WTC11 (cell line): ENCODE measurements at regions of chr20 and their contacts with region 1.

Region 1: DNA sequence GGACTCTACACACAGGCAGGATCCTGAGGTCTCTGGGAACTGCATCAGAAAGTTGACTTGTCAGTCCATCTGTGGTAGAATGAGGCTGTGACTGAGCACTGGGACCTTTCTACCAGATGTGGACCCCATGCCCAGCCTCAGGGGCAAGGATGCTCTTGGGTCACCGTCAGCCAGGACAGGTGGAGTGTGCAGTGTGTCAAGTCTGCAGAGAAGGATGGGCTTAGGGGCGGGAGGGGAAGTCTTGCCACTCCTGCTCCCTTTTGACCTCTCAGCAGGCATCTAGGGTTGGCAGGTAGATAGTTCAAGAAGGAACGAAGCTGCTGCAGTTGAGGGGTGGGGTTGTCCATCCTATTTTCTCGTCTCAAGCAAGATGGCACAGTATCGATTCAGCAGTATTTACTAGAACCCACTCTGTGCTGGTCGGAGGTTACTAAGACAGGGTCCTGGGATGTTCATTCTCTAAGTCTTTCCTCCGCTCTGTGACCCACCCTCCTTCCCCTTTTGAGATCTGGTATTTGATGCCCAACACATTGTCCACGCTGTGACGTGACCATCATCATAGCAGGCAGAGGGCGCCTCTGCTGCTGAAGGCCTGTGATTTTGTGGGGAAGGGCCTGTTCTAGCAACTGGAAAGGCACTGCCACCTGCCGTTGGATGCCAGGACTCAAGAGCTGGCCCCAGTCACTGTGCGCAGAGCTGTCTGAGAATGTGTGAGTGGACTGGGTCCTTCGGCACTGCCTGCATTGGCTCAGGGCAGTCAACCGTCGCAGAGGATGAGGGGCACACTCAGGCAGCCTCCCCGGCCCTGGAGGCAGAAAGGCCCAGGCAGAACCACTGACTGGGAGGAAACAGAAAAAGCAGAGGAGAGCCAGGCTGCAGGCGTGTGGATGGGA is 23.2 kb downstream of the RBCK1 start:
- DNase-seq: peak; percentile 75
- ATAC-seq: peak; percentile 57
- H3K4me3 Mint-ChIP-seq: no peak overlapping the region
- H3K27ac Mint-ChIP-seq: no peak overlapping the region
- H3K4me1 Mint-ChIP-seq: peaks cover 23% of the 10 kb centered on the region
- H3K27me3 Mint-ChIP-seq: peaks cover 40% of the 10 kb centered on the region
- CTCF ChIP-seq: peak; percentile 37; the same call in 1 of the 2 replicates

Region 2: DNA sequence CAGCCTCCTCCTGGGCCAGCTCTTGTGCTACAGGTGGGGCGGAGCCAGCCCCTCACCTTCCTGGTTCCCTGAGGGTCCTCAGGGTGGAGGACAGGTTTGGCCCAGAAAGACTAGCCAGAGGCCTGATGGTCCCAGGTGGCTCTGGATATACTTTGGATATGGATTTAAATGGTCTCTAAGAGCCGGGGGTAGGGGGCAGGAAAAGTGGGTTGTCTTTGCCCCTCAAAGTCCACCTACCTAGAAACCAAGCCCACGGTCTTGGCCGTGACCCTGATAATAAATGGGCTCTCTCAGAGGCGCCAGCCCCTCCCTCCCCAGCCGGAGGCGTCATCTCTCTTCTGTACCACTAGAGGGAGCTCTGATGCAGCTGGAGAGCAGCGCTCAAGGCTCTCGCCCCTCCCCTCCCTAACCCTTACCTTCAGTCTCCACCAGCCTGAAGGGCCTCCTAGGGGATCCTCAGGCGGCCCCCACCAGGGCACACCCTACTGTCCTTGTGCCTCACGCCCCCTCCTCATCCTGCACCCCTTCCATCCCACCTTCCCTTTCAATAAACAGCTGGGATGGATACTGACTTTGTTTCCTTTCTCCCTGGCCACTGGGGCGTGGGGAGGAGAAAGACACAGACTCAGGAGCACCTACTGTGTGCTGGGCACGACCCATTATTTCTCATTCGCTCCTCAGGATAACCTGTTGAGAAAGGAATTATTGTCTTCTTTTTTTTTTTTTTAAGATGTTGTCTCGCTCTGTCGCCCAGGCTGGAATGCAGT is 76.8 kb before region 1 on chr20:
- CTCF ChIA-PET with region 1: interaction called, 66 read pairs
- POLR2A ChIA-PET with region 1: no interaction called
- DNase-seq: peak; percentile 84
- ATAC-seq: peak; percentile 92
- H3K4me3 Mint-ChIP-seq: no peak overlapping the region
- H3K27ac Mint-ChIP-seq: no peak overlapping the region
- H3K4me1 Mint-ChIP-seq: peaks cover 6% of the 10 kb centered on the region; the same call in 1 of the 2 replicates
- H3K27me3 Mint-ChIP-seq: no peaks in the 10 kb centered on the region; the same call in 1 of the 2 replicates
- CTCF ChIP-seq: peak; percentile 95

Region 3: DNA sequence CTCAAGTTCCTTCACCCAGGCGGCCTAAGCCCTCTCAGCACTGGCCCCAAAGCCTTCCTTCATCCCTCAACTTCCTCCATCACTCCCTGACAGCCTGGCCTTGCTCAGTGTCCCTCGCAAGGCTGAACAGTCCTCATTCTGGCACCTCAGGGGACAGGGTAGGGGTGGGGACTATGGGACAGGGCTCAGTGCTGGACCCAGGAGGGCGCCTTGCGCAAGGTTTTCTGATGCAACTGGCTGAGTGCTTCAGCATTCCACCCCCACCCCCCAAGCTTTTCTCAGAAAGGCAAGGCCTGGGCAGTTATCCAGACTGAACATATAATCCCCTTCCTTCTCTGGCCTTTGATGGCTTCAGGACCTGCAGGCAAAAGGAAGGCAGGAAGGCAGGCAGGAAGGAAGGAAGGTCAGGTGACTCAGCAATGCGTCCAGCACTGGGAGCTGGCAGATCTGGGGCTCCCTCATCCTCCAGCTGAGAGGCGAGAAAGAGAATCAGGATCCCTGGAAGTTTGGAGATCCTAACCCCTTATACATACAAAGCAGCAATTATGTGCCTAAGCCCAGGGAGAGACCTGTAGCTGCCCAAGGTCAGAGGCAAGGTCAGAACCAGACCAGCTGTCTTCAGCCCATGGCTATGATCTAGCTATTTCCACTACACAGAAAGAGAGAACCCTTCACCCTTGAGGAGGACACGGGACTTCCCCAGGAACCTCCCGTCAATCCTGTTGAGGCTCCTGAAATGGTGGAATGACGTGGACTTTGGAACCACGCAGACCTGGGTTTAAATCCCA is 59.3 kb before region 1 on chr20:
- CTCF ChIA-PET with region 1: interaction called, 19 read pairs
- POLR2A ChIA-PET with region 1: no interaction called
- DNase-seq: no peak
- ATAC-seq: peak; percentile 27
- H3K4me3 Mint-ChIP-seq: no peak overlapping the region
- H3K27ac Mint-ChIP-seq: no peak overlapping the region
- H3K4me1 Mint-ChIP-seq: peaks cover 16% of the 10 kb centered on the region
- H3K27me3 Mint-ChIP-seq: peaks cover 10% of the 10 kb centered on the region; the same call in 1 of the 2 replicates
- CTCF ChIP-seq: no peak

Region 4: GRCh38 chr20:401682-402495 is 29.4 kb before region 1 on chr20:
- CTCF ChIA-PET with region 1: interaction called, 23 read pairs
- POLR2A ChIA-PET with region 1: interaction called, 5 read pairs
- DNase-seq: no peak
- ATAC-seq: no peak
- H3K4me3 Mint-ChIP-seq: no peak overlapping the region
- H3K27ac Mint-ChIP-seq: 0 out of 2 replicates have a peak overlapping the region, but pooled peaks have one; percentile 9
- H3K4me1 Mint-ChIP-seq: peaks cover 20% of the 10 kb centered on the region
- H3K27me3 Mint-ChIP-seq: peaks cover 8% of the 10 kb centered on the region; the same call in 1 of the 2 replicates
- CTCF ChIP-seq: no peak

Region 5: GRCh38 chr20:462199-462991 is 31.1 kb after region 1 on chr20 and contains the start of gene TBC1D20:
- CTCF ChIA-PET with region 1: interaction called, 11 read pairs
- POLR2A ChIA-PET with region 1: no interaction called
- DNase-seq: peak; percentile 78
- ATAC-seq: peak; percentile 96
- H3K4me3 Mint-ChIP-seq: peak within 1 kb of the TSS; percentile 95
- H3K27ac Mint-ChIP-seq: no peak within 1 kb of the TSS; the same call in 1 of the 2 replicates
- H3K4me1 Mint-ChIP-seq: peaks cover 19% of the 10 kb centered on the region
- H3K27me3 Mint-ChIP-seq: peaks cover 43% of the 10 kb centered on the region
- CTCF ChIP-seq: no peak
- total RNA-seq, gene TBC1D20: 14.6 to 15.6 TPM (median 15.4 TPM) in 3 replicates

Region 6: GRCh38 chr20:634556-634955 is 203.3 kb after region 1 on chr20:
- CTCF ChIA-PET with region 1: no interaction called
- POLR2A ChIA-PET with region 1: no interaction called
- DNase-seq: no peak
- ATAC-seq: peak; percentile 30
- H3K4me3 Mint-ChIP-seq: no peak overlapping the region
- H3K27ac Mint-ChIP-seq: no peak overlapping the region
- H3K4me1 Mint-ChIP-seq: peaks cover 6% of the 10 kb centered on the region; the same call in 1 of the 2 replicates
- H3K27me3 Mint-ChIP-seq: no peaks in the 10 kb centered on the region; the same call in none of the 2 replicates
- CTCF ChIP-seq: no peak